Motor neuron (in vitro differentiated cells): ENCODE measurements at regions of chr15 and their contacts with region 1.

Region 1: DNA sequence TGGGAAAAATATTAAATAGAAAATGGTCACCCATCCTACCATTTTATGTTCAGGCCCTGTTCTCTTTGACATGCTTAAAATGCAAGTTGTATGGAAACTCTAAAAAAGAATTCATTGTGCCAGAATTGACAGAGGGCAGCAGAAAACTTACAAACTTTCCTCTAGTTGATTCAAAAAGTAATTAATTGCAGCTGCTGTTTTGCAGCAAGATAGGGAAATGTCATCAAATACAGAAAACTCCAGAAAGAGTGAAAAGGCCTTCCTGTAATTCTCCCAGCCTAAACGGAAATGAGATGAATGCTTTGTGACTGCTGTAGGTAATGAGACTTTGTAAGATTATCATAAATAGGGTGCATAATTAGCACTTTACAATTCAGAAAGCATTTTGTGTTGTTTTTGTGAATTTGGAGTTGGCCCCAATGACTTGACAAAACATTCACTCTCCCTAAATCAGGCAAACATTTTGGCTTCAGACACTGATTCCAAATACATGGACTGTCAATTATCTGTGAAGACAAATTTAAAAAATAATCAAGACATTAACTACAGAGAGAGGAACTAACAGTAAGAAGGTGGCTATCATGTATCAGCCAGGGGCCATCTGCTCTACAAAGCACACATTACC is 861.8 kb downstream of the SQOR start:
- ATAC-seq: no peak
- H3K4me3 ChIP-seq: no peak overlapping the region
- H3K27ac ChIP-seq: no peak overlapping the region
- H3K4me1 ChIP-seq: no peaks in the 10 kb centered on the region

Region 2: GRCh38 chr15:46442184-46442583 is 54.4 kb before region 1 on chr15:
- in situ Hi-C with region 1: loop called in 1 of 9 experiments (anchors 10 kb)
- ATAC-seq: peak in 5 of 8 experiments; percentile 50 to 72 (median 71)
- H3K4me3 ChIP-seq: no peak overlapping the region
- H3K27ac ChIP-seq: no peak overlapping the region
- H3K4me1 ChIP-seq: no peaks in the 10 kb centered on the region